Activated CD4-positive, alpha-beta memory T cell treated with anti-CD3 and anti-CD28 coated beads, Interleukin-2, amount 10 ng/mL, durations not matched to agents 7 days and 5 days (primary cell): ENCODE measurements at regions of chr20 and their contacts with region 1.

Region 1: GRCh38 chr20:17898548-17898994 is 70.0 kb downstream of the SNX5 start:
- DNase-seq: peak; percentile 75
- H3K4me3 Mint-ChIP-seq: no peak overlapping the region
- H3K27ac Mint-ChIP-seq: no peak overlapping the region
- H3K4me1 Mint-ChIP-seq: peaks cover 40% of the 10 kb centered on the region
- H3K27me3 Mint-ChIP-seq: peaks cover 28% of the 10 kb centered on the region

Region 2: DNA sequence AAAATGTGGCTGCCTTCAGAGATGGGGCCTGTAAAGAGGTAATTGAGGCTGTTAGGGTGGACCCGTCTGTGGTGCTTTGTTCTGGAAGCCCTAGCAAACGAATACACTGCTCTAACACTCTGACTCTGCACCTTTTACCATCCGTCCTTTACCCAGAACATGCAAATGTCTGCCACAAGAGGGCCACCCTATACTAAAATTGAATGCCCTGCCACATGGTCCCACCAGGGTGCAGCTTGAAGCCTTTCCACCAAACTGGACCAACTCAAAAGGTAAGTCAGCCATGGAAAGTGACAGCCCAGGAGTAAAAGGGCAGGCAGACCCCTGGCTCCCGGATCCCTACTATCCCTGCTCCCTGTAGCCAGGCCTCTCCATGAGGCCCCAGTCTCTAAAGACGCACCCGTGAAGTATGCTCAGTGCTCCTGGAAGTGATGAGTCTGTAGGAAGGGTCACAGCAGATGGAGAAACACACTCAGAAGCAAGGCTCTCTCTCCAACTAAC is 361.6 kb before region 1 on chr20:
- CTCF ChIA-PET with region 1: interaction called, 16 read pairs
- POLR2A ChIA-PET with region 1: no interaction called
- DNase-seq: peak; percentile 77
- H3K4me3 Mint-ChIP-seq: no peak overlapping the region
- H3K27ac Mint-ChIP-seq: no peak overlapping the region
- H3K4me1 Mint-ChIP-seq: peaks cover 45% of the 10 kb centered on the region
- H3K27me3 Mint-ChIP-seq: peaks cover 25% of the 10 kb centered on the region

Region 3: DNA sequence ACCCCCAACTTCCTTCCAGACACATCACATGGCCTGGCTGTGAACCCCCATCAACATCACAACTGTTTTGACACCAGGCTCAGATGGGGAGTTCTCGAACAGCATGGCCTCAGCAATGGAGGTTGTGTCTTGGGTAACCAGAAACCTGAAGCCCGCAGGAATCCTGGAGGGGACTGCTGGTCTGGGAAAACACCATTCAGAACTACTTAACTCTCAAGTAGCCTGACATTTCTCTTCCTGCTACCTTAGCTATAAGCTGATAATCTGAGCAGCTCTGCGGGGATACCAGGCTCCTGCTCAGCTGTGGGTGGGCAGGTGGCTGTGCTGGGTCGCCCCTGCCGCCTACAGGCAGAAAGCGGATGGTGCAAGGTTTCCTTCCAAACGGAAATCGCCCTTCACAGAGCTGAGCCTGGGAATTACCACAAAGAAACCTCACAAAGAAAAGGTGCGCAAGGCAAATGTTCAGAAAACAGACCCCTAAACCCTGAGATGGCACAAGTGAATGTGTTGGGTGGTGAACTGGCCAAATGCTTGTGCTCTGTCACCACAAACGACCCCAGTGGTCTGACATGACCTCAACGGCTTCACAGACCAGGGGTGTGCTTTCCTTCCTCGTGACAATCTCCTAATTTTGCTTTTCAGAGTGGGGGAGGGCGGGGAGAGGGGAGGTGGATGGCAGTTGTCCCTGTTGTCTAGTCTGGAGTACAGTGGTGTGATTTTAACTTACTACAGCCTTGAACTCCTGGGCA is 40.5 kb after region 1 on chr20:
- CTCF ChIA-PET with region 1: interaction called, 17 read pairs
- POLR2A ChIA-PET with region 1: no interaction called
- DNase-seq: peak; percentile 68
- H3K4me3 Mint-ChIP-seq: no peak overlapping the region
- H3K27ac Mint-ChIP-seq: no peak overlapping the region
- H3K4me1 Mint-ChIP-seq: peaks cover 24% of the 10 kb centered on the region
- H3K27me3 Mint-ChIP-seq: no peaks in the 10 kb centered on the region

Region 4: DNA sequence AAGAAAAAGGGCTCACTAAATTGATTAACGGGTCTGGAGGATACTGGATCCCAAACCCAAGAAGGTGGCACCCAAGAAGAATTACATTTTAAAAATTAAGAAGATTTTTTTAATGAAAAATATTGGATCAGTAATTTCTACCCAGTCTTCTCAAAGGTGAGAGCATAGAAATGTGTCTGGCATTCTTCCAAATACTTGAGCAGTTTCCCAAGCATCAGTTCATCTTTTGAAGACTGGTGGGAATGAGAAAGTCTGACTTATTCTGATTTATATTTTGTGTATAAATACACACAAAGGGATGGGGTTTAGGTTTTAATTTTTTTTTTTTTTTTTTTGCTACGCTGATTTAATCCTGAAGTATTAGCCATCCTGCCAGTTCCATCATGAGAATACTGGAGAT is 73.5 kb after region 1 on chr20:
- CTCF ChIA-PET with region 1: no interaction called
- POLR2A ChIA-PET with region 1: no interaction called
- DNase-seq: no peak
- H3K4me3 Mint-ChIP-seq: peak overlapping the region; percentile 97
- H3K27ac Mint-ChIP-seq: peak overlapping the region; percentile 98
- H3K4me1 Mint-ChIP-seq: peaks cover 42% of the 10 kb centered on the region
- H3K27me3 Mint-ChIP-seq: no peaks in the 10 kb centered on the region